HCT116 (cell line): ENCODE measurements at regions of chr11 and their contacts with region 1.

Region 1: DNA sequence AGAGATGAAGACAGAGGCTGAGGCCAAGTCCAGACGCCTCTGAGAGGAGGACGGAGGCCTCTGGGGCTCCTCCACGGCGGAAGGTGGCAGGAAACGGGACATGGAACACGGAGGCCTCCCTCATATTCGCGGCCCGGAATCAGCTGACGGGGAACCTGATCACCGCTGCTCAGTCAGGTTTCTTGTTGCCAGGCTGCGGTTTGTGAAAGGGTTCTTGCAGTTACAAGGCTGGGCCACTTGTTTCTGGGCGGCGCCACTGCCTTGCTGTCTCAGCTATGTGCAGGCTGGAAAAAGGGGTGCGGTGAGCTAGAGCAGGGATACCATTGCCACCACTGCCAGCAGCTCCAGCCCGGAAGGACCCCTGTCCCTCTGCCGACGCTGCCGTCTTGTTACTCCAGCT is 10.0 kb upstream of the MMP1 start:
- DNase-seq: peak; percentile 75
- ATAC-seq: peak; percentile 98
- H3K4me3 ChIP-seq: peak overlapping the region; percentile 17 to 31
- H3K27ac ChIP-seq: no peak overlapping the region
- H3K4me1 ChIP-seq: peaks cover 3 to 14% of the 10 kb centered on the region in 2 experiments; a peak in 3 of 4 replicates
- H3K27me3 ChIP-seq: no peaks in the 10 kb centered on the region
- CTCF ChIP-seq: peak; percentile 29 to 69 (median 64); a peak in 5 of 6 replicates
- POLR2A ChIP-seq: no peak
- RAD21 ChIP-seq: peak; percentile 50

Region 2: GRCh38 chr11:102680945-102681344 is 127.0 kb before region 1 on chr11:
- CTCF ChIA-PET with region 1: no interaction called
- POLR2A ChIA-PET with region 1: no interaction called
- RAD21 ChIA-PET with region 1: no interaction called
- intact Hi-C with region 1: no loop called
- DNase-seq: no peak
- ATAC-seq: no peak
- H3K4me3 ChIP-seq: no peak overlapping the region
- H3K27ac ChIP-seq: no peak overlapping the region
- H3K4me1 ChIP-seq: no peaks in the 10 kb centered on the region
- H3K27me3 ChIP-seq: no peaks in the 10 kb centered on the region
- CTCF ChIP-seq: no peak
- POLR2A ChIP-seq: no peak
- RAD21 ChIP-seq: no peak

Region 3: DNA sequence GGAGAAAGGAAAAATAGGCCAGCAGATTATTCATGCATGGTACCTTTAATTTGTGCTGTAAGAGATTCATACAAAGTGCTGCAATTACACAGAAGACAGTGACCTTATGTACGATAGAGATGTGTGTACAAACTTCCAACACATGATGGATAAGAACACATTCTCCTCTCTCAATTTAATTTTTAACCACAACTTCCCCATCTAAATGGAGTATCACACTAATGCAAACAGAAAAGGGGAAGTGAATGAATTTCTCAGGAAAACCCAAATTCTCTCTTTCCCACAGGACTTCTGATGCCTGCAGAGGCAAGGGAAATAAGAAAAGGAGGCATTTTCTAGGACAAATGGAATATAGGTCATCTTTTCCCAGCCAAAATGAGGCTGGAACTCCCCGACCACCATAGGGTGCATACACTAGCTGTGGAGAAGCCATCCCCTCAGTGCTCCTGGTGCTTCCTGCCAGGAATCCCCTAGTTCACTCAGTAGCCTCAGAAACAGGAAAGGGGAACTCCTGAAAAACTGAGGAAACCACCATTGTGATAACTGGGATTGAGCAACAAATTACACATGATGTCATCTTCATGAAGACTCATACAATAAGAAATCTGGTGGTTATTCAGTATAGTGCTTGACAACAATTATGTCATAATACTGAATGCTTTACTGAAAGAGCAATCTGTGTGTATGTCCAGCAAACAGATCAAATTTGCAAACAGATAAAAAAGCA is 49.9 kb before region 1 on chr11:
- CTCF ChIA-PET with region 1: no interaction called
- POLR2A ChIA-PET with region 1: no interaction called
- RAD21 ChIA-PET with region 1: no interaction called
- intact Hi-C with region 1: no loop called
- DNase-seq: no peak
- ATAC-seq: no peak
- H3K4me3 ChIP-seq: no peak overlapping the region
- H3K27ac ChIP-seq: no peak overlapping the region
- H3K4me1 ChIP-seq: peaks cover 0 to 3% of the 10 kb centered on the region in 2 experiments; a peak in 1 of 4 replicates
- H3K27me3 ChIP-seq: no peaks in the 10 kb centered on the region
- CTCF ChIP-seq: no peak
- POLR2A ChIP-seq: no peak
- RAD21 ChIP-seq: no peak

Region 4: DNA sequence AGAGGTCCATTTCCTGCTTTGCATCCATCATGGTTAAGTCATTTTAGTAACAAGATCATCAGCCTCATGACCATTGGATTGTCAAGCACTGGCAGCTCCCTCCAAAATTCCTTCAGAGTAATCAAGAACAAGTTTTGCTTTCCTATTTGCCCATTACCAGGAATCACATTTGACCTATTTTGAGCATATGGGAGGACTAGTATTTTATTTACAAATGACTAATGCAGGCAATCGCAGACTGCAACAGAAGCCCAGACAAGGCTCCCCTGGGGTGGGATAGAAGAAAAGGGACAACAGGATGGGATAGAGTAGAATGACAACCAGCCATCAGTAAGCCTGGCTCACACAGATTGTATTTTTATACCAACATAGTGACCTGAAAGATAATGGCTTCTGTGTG is 36.6 kb before region 1 on chr11:
- CTCF ChIA-PET with region 1: no interaction called
- POLR2A ChIA-PET with region 1: no interaction called
- RAD21 ChIA-PET with region 1: no interaction called
- intact Hi-C with region 1: no loop called
- DNase-seq: no peak
- ATAC-seq: no peak
- H3K4me3 ChIP-seq: no peak overlapping the region
- H3K27ac ChIP-seq: no peak overlapping the region
- H3K4me1 ChIP-seq: no peaks in the 10 kb centered on the region
- H3K27me3 ChIP-seq: no peaks in the 10 kb centered on the region; the same call in 1 of the 2 replicates
- CTCF ChIP-seq: no peak
- POLR2A ChIP-seq: no peak
- RAD21 ChIP-seq: no peak

Region 5: DNA sequence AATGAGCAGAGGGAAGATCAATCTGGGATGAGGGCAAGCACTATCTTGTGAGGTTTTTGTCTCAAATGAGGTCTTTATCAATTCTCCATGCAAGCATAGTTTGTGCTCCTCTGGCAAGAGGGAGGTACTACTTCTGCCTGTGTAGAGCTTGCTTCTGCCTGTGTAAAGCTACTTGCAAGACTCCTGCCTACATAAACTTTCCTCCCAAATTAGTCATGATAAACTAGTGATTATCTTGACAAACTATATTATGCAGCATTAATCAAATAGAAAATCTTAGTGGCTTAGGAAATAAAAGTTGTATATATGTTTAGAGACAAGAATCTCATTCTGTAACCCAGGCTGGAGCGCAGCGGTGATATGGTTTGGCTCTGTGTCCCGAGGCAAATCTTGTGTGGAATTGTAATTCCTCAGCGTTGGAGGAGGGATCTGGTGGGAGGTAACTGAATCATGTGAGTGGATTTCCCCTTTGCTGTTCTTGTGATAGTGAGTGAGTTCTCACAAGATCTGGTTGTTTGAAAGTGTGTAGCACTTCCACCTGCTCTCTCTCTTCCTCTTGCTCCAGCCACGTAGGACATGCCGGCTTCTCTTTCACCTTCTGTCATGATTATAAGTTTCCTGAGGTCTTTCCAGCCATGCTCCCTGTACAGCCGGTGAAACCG is 19.5 kb before region 1 on chr11:
- CTCF ChIA-PET with region 1: no interaction called
- POLR2A ChIA-PET with region 1: no interaction called
- RAD21 ChIA-PET with region 1: no interaction called
- intact Hi-C with region 1: no loop called
- DNase-seq: no peak
- ATAC-seq: no peak
- H3K4me3 ChIP-seq: no peak overlapping the region
- H3K27ac ChIP-seq: no peak overlapping the region
- H3K4me1 ChIP-seq: no peaks in the 10 kb centered on the region
- H3K27me3 ChIP-seq: no peaks in the 10 kb centered on the region
- CTCF ChIP-seq: no peak
- POLR2A ChIP-seq: no peak
- RAD21 ChIP-seq: no peak

Region 6: GRCh38 chr11:102940714-102941588 is 133.0 kb after region 1 on chr11:
- CTCF ChIA-PET with region 1: interaction called, 8 read pairs
- POLR2A ChIA-PET with region 1: no interaction called
- RAD21 ChIA-PET with region 1: no interaction called
- intact Hi-C with region 1: loop called (anchors 2 kb)
- DNase-seq: peak; percentile 70
- ATAC-seq: peak; percentile 94
- H3K4me3 ChIP-seq: no peak overlapping the region
- H3K27ac ChIP-seq: no peak overlapping the region
- H3K4me1 ChIP-seq: peaks cover 0 to 9% of the 10 kb centered on the region in 2 experiments; a peak in 2 of 4 replicates
- H3K27me3 ChIP-seq: no peaks in the 10 kb centered on the region
- CTCF ChIP-seq: peak; percentile 66 to 88 (median 86)
- POLR2A ChIP-seq: no peak
- RAD21 ChIP-seq: peak; percentile 82

Region 7: GRCh38 chr11:103055221-103055890 is 247.4 kb after region 1 on chr11:
- CTCF ChIA-PET with region 1: no interaction called
- POLR2A ChIA-PET with region 1: no interaction called
- RAD21 ChIA-PET with region 1: no interaction called
- intact Hi-C with region 1: loop called (anchors 10 kb)
- DNase-seq: peak; percentile 26
- ATAC-seq: peak; percentile 59
- H3K4me3 ChIP-seq: no peak overlapping the region
- H3K27ac ChIP-seq: no peak overlapping the region
- H3K4me1 ChIP-seq: no peaks in the 10 kb centered on the region
- H3K27me3 ChIP-seq: no peaks in the 10 kb centered on the region
- CTCF ChIP-seq: peak; percentile 45 to 71 (median 55); a peak in 5 of 6 replicates
- POLR2A ChIP-seq: no peak
- RAD21 ChIP-seq: peak; percentile 68